Sigmoid colon (tissue), 7 donors: ENCODE measurements at regions of chr16 and their contacts with region 1.

Region 1: GRCh38 chr16:48385272-48386150 is at the start of gene SIAH1:
- DNase-seq: peak; percentile 91
- H3K4me3 ChIP-seq: peak within 1 kb of the TSS; percentile 76 to 96 (median 90)
- H3K27ac ChIP-seq: peak within 1 kb of the TSS; percentile 96 to 99 (median 98)
- H3K4me1 ChIP-seq: peaks cover 0 to 36% (median 27%) of the 10 kb centered on the region in 4 donors
- H3K27me3 ChIP-seq: no peaks in the 10 kb centered on the region
- CTCF ChIP-seq: no peak
- EP300 ChIP-seq: no peak
- POLR2A ChIP-seq: no peak
- total RNA-seq, gene SIAH1: 23.5 to 37.4 (median 29.9) TPM

Region 2: DNA sequence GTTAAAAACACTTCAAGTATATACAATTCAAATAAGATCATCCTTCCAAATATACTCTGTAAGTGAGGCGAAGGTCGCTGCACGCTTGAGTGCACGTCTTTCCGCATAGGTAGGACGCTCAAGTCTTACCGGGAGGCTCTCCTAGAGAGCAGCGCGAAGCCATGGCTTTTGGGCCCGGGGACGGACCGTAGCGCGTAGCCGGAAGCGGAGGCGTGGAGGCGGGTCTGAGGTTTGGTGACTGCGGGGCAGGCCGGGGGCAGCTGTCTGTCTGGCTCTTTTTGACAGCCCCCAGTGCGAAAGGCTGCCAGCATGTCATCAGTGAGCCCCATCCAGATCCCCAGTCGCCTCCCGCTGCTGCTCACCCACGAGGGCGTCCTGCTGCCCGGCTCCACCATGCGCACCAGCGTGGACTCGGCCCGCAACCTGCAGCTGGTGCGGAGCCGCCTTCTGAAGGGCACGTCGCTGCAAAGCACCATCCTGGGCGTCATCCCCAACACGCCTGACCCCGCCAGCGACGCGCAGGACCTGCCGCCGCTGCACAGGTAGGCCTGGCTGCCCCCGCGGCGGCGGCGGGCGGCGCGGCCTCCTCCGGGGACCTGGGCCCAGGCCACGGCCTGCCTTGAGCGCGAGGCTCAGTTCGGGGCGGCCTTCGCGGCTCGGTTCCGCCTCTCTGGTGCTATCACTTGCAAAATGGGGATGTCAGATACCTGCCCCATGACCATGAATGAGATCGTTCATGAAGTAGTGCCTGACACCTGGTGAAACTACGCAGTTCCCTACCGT is 141.2 kb before region 1 on chr16 and contains the start of gene LONP2:
- intact Hi-C with region 1: loop called (anchors 10 kb)
- DNase-seq: peak; percentile 92
- H3K4me3 ChIP-seq: peak within 1 kb of the TSS; percentile 81 to 94 (median 82)
- H3K27ac ChIP-seq: peak within 1 kb of the TSS; percentile 85 to 90 (median 88)
- H3K4me1 ChIP-seq: peaks cover 0 to 37% (median 31%) of the 10 kb centered on the region in 4 donors
- H3K27me3 ChIP-seq: no peaks in the 10 kb centered on the region
- CTCF ChIP-seq: no peak
- EP300 ChIP-seq: peak in 1 of 4 donors; percentile 34
- POLR2A ChIP-seq: peak; percentile 38 to 46
- total RNA-seq, gene LONP2: 42.3 to 60.3 (median 51.8) TPM

Region 3: GRCh38 chr16:48365581-48366164 is 19.8 kb before region 1 on chr16:
- intact Hi-C with region 1: loop called (anchors 2 kb)
- DNase-seq: peak; percentile 94
- H3K4me3 ChIP-seq: peak overlapping the region; percentile 64 to 70 (median 65)
- H3K27ac ChIP-seq: peak overlapping the region; percentile 85 to 93 (median 89)
- H3K4me1 ChIP-seq: peaks cover 0 to 53% (median 34%) of the 10 kb centered on the region in 4 donors
- H3K27me3 ChIP-seq: no peaks in the 10 kb centered on the region
- CTCF ChIP-seq: no peak
- EP300 ChIP-seq: no peak
- POLR2A ChIP-seq: peak; percentile 52 to 80

Region 4: GRCh38 chr16:48420437-48420836 is 34.9 kb after region 1 on chr16:
- intact Hi-C with region 1: no loop called
- DNase-seq: no peak
- H3K4me3 ChIP-seq: no peak overlapping the region
- H3K27ac ChIP-seq: no peak overlapping the region
- H3K4me1 ChIP-seq: no peaks in the 10 kb centered on the region
- H3K27me3 ChIP-seq: no peaks in the 10 kb centered on the region
- CTCF ChIP-seq: no peak
- EP300 ChIP-seq: no peak
- POLR2A ChIP-seq: no peak

Region 5: DNA sequence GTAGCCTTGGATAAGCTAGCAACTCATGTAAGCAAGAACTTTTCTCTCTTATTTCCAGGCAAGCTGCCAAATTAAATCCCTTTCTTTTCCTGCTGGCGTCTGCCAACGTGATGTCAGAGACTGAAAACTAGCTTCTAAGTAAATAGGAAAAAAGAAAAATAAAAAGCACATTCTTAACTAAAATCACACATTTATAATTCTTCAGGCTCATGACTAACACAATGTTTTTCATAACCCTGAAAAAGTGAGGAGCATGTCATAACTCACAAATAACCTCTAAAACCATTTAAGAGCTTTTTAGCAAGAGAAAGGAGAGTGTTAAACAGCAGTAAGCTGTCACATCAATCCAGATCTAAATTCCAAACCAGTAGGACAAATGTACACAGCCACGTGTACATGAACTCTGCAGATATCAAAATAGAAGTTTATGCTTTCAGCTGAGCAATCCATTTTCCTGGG is 114.4 kb after region 1 on chr16:
- intact Hi-C with region 1: loop called (anchors 10 kb)
- DNase-seq: peak; percentile 86
- H3K4me3 ChIP-seq: no peak overlapping the region
- H3K27ac ChIP-seq: peak overlapping the region; percentile 47 to 67 (median 62)
- H3K4me1 ChIP-seq: peaks cover 0 to 31% (median 27%) of the 10 kb centered on the region in 4 donors
- H3K27me3 ChIP-seq: no peaks in the 10 kb centered on the region
- CTCF ChIP-seq: no peak
- EP300 ChIP-seq: no peak
- POLR2A ChIP-seq: no peak

Region 6: GRCh38 chr16:48535831-48536613 is 150.5 kb after region 1 on chr16:
- intact Hi-C with region 1: loop called (anchors 10 kb)
- DNase-seq: peak; percentile 82
- H3K4me3 ChIP-seq: no peak overlapping the region
- H3K27ac ChIP-seq: peak overlapping the region; percentile 45 to 80 (median 67)
- H3K4me1 ChIP-seq: peaks cover 0 to 39% (median 34%) of the 10 kb centered on the region in 4 donors
- H3K27me3 ChIP-seq: no peaks in the 10 kb centered on the region
- CTCF ChIP-seq: no peak
- EP300 ChIP-seq: no peak
- POLR2A ChIP-seq: no peak

Region 7: GRCh38 chr16:48609652-48610029 is 224.1 kb after region 1 on chr16:
- intact Hi-C with region 1: loop called (anchors 2 kb)
- DNase-seq: peak; percentile 82
- H3K4me3 ChIP-seq: peak overlapping the region; percentile 57 to 98 (median 98)
- H3K27ac ChIP-seq: peak overlapping the region; percentile 88 to 93 (median 92)
- H3K4me1 ChIP-seq: peaks cover 0 to 44% (median 39%) of the 10 kb centered on the region in 4 donors
- H3K27me3 ChIP-seq: no peaks in the 10 kb centered on the region
- CTCF ChIP-seq: no peak
- EP300 ChIP-seq: no peak
- POLR2A ChIP-seq: no peak